A549 (cell line): ENCODE measurements at regions of chr11 and their contacts with region 1.

Region 1: DNA sequence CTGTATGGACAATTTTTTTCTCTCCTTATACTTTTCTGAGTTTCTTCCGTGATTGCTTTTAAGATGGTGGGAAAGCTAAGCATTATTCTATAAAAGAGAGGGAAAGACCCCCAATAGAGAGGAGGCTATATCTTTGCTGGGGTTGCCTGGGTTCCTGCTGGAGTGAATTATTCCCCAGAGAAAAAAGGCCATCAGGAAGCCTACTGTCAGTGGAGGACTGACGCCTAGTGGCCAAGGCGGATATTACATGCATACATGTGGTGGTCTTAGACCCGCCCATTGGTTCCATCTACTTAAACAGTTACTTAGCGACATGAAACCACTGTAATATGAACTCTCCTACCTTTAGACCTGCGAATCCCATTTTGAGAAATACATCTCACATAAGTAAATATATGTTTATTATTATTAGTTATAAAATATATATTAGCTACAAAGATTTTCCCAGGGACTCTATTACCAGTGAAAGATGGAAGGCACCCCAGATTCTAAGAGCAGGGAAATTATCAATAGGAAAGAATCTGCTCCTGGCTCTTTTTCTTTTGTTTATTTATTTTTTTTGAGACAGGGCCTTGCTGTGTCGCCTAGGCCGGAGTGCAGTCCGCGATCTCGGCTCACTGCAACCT is 15.7 kb upstream of the PGA3 start:
- DNase-seq: peak; percentile 69 to 82
- ATAC-seq: peak; percentile 59 to 94; a peak in 5 of 6 replicates
- H3K4me3 ChIP-seq: no peak overlapping the region
- H3K27ac ChIP-seq: no peak overlapping the region
- H3K4me1 ChIP-seq: no peaks in the 10 kb centered on the region
- CTCF ChIP-seq: peak; percentile 88
- EP300 ChIP-seq: no peak
- POLR2A ChIP-seq: no peak
- RAD21 ChIP-seq: peak; percentile 83 to 92

Region 2: GRCh38 chr11:60913793-60914632 is 273.6 kb before region 1 on chr11 and contains the start of gene TMEM109:
- CTCF ChIA-PET with region 1: interaction called, 15 read pairs
- POLR2A ChIA-PET with region 1: no interaction called
- DNase-seq: peak; percentile 87 to 94
- ATAC-seq: peak; percentile 79 to 89
- H3K4me3 ChIP-seq: peak within 1 kb of the TSS; percentile 76
- H3K27ac ChIP-seq: peak within 1 kb of the TSS; percentile 91 to 94
- H3K4me1 ChIP-seq: peaks cover 21% of the 10 kb centered on the region
- CTCF ChIP-seq: no peak
- EP300 ChIP-seq: no peak
- POLR2A ChIP-seq: peak; percentile 71
- RAD21 ChIP-seq: no peak
- polyA plus RNA-seq, gene TMEM109: 40.9 and 58.0 TPM in 2 replicates

Region 3: DNA sequence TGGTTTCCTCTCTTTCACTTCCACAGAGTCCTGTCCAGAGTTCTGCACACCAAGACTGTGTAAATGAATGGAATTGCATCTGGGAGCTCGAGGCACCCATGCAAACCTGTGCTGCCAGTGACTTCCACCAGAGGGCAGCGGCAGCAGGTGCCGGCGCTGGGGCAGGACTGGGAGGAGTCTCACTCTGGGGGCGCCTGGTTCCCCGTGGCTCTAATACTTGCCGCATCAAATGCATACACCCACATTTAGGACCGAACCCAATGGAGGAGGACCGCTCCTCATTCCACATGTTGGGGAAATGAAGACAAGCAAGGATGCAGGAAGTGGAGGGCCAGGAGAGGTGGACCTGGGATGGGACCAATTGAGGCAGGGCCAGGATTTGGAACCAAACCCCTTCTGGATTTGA is 217.2 kb before region 1 on chr11:
- CTCF ChIA-PET with region 1: interaction called, 19 read pairs
- POLR2A ChIA-PET with region 1: no interaction called
- DNase-seq: peak; percentile 38 to 49
- ATAC-seq: peak; percentile 80 to 91
- H3K4me3 ChIP-seq: no peak overlapping the region
- H3K27ac ChIP-seq: no peak overlapping the region
- H3K4me1 ChIP-seq: no peaks in the 10 kb centered on the region
- CTCF ChIP-seq: peak; percentile 59
- EP300 ChIP-seq: no peak
- POLR2A ChIP-seq: no peak
- RAD21 ChIP-seq: peak; percentile 54 to 56

Region 4: DNA sequence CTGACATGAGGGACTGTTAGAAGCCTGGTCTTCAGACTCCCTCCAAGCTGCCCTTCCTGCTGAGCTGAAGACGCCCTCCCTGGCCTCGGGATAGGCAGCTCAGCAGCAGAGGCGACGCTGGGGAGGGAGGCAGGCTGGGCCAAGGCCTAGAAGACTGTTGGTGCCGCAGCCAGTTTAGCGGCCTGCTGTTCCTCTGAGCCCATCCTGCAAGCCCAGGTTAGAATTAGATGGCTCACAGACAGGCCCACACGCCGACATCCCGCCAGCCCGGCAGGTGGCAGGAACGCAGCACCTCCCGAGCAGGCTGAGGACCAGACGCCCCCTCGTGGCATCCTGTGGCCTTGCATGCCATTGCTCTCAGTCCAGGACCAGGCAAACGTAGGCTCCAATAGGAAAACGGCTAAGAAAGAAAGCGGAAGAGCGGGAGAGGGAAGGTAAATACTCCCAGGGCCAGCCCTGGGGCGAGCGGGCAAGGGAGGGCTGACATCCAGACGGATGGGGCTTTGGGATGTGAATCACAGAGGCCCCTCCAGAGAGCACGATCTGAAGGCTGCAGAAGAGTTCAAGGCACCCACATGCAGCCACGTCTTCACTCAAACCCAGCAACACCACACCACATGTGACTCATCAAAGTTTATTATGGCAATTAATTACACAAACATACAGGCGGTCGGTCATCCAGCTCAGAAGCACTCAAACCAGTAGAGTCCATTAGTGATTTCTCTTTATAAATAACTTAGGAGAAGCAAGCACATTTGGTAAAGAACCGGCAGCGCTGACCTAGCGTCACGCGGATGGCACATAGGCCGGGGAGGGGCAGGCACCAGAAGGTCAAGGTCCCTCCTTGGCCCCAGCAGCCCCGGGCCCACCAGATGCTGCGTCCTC is 57.7 kb before region 1 on chr11:
- CTCF ChIA-PET with region 1: interaction called, 23 read pairs
- POLR2A ChIA-PET with region 1: no interaction called
- DNase-seq: peak; percentile 91 to 99
- ATAC-seq: peak; percentile 82 to 98
- H3K4me3 ChIP-seq: no peak overlapping the region
- H3K27ac ChIP-seq: peak overlapping the region; percentile 13 to 75; a peak in 3 of 6 replicates
- H3K4me1 ChIP-seq: 0 out of 3 replicates have a peak, but pooled peaks cover 4% of the 10 kb centered on the region
- CTCF ChIP-seq: peak; percentile 99
- EP300 ChIP-seq: no peak
- POLR2A ChIP-seq: no peak
- RAD21 ChIP-seq: peak; percentile 90 to 91

Region 5: DNA sequence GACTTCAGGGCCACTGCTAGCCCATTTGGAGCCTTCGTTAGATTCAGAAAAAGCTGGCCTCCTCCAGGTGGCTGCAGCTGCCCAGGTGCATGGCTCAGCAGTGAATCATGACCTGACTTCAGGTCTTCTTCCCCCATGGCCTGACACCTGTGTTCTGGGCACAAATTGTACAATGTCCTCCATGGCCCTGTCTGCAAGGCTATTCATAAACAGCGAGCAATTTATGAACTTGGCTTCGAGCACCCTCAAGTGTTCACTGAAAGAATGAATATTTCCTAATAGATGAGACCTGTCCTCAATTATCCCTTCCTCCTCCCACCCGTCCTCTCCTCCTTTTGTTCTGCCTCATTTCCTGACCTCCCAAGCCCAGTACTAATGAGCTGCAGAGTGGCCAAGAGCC is 14.2 kb before region 1 on chr11:
- CTCF ChIA-PET with region 1: interaction called, 56 read pairs
- POLR2A ChIA-PET with region 1: no interaction called
- DNase-seq: peak in 1 of 2 experiments; percentile 49
- ATAC-seq: peak; percentile 44 to 80; a peak in 4 of 6 replicates
- H3K4me3 ChIP-seq: no peak overlapping the region
- H3K27ac ChIP-seq: no peak overlapping the region
- H3K4me1 ChIP-seq: no peaks in the 10 kb centered on the region
- CTCF ChIP-seq: peak; percentile 27; the same call in 1 of the 3 replicates
- EP300 ChIP-seq: no peak
- POLR2A ChIP-seq: no peak
- RAD21 ChIP-seq: peak; percentile 50 to 59; a peak in 4 of 5 replicates

Region 6: GRCh38 chr11:61201476-61201875 is 13.9 kb after region 1 on chr11:
- CTCF ChIA-PET with region 1: interaction called, 13 read pairs
- POLR2A ChIA-PET with region 1: no interaction called
- DNase-seq: no peak
- ATAC-seq: no peak
- H3K4me3 ChIP-seq: no peak overlapping the region
- H3K27ac ChIP-seq: no peak overlapping the region
- H3K4me1 ChIP-seq: no peaks in the 10 kb centered on the region
- CTCF ChIP-seq: no peak
- EP300 ChIP-seq: no peak
- POLR2A ChIP-seq: no peak
- RAD21 ChIP-seq: no peak

Region 7: DNA sequence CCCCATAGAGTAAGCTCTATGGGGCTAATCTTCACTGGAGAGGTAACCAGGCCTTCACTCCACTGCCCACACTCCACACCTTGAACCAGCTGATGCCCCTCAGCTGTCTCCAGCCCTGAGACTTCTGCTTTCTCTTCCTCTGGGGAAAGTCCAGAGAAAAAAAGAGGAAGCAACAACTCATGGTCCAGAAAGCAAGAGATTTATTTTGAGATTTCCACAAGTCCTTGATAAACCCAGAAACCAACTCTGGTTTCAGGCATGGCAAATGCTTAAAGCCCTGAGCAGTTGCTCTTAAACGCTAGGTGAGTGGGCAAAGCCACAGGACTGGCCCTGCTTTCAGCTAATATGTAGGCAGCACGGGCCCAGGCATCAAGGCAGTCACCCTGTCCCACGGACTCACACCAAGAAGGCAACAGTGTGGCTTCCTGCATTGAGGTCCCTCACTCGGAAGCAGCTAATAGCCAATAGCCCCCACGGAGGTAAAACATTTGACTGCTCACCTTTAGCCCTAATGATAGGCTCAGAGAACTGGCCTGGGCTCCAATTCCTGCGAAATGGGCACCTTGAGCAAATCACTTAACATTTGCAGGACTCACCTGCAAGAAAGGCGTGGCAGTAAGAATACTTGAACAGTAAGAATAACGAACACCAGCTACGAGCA is 169.7 kb after region 1 on chr11:
- CTCF ChIA-PET with region 1: no interaction called
- POLR2A ChIA-PET with region 1: no interaction called
- DNase-seq: no peak
- ATAC-seq: no peak
- H3K4me3 ChIP-seq: no peak overlapping the region
- H3K27ac ChIP-seq: no peak overlapping the region
- H3K4me1 ChIP-seq: peaks cover 8% of the 10 kb centered on the region; the same call in 1 of the 3 replicates
- CTCF ChIP-seq: no peak
- EP300 ChIP-seq: no peak
- POLR2A ChIP-seq: no peak
- RAD21 ChIP-seq: no peak

Region 8: DNA sequence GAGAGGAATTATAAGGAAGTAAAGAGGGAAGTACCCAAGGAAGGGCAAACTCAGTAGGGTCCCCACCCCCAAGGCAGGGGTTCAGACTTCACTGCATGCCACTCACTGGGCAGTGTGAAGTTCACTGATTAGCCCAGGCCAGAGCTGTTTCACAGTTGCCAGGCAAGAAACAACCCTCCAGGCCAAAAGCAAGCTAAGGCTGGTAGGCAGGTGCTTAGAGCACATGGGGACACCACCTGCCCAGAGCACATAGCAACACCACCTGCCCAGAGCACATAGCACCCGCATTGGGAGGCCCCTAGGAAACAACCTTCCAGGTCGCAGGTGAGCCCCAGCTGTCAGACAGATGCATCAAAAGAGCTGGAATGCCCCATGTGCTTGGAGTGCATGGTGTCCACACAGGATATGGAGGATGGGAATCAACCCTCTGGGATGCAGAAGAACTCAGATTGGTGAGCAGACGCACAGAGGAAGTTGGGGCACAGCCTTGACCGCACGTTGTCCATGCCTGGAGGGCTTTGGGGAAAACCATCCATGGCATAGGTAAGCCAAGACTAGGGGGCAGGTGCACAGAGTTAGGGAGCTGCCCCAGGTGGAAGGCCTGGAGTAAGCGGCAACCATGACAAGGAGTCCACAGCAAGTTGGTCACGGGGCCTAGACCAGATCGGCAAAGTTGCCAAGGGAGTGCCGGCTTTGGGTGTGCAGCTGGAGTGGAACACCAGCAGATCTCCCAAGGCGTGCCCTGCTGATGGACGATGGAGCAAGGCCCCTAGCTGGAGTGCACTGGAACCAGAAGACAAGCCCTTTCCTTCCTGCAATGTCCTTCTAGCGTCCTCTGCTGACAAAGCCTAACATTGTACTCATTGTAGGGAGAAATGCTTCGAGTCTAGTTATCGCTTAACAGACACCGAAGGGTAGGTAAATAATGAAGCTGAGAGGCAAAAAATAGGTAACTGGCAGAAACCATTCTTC is 196.9 kb after region 1 on chr11:
- CTCF ChIA-PET with region 1: no interaction called
- POLR2A ChIA-PET with region 1: no interaction called
- DNase-seq: peak in 1 of 2 experiments; percentile 66
- ATAC-seq: peak; percentile 72 to 76
- H3K4me3 ChIP-seq: no peak overlapping the region
- H3K27ac ChIP-seq: no peak overlapping the region
- H3K4me1 ChIP-seq: peaks cover 3% of the 10 kb centered on the region; the same call in 2 of the 3 replicates
- CTCF ChIP-seq: peak; percentile 17; the same call in 1 of the 3 replicates
- EP300 ChIP-seq: no peak
- POLR2A ChIP-seq: no peak
- RAD21 ChIP-seq: peak; percentile 28 to 54; a peak in 2 of 5 replicates